ENCODE measurements at regions of chr1 and their contacts with region 1.

Region 1: DNA sequence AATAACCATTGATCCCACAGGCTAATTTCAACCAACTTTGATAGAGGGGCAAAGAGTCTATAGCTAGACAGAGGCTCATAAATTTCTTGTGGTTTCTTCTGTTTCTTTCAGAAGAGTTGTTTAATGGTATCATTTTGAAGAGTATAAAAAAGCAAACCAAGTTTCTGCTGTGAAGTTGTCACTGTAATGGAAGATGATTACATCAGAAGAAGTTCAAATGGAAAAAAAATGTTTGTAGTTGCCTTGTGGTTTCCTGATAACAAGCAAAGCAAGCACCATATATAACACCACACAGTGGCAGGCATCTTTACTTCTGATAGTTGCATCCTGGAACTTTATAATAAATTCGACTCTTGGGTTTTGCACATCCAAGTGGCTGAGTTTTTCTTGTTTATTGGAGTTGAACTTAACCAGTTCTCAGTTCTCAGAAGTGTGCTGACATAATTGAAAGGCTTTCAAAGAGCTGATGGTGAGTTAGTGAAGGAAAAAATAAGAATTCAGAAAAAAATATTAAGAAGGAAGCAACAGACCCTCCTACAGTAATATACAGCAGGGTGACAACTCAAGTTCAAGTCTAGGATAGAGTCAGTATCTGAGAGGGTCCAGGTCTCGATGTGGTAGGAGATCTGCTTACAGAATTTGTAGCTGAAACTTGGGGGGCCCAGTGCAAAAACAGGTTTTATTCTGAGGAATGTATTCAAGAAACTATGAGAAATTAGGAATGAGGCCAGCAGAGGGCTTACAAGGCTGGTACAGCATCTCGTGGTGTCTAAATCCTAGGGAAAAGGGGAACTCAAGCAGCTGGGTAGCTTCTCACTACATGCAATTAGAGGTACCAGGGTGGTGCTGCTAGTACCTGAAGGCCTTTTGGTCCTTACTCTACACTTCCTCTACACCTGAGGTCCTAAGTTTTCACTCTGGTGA is 123.5 kb downstream of the CRB1 start:
- DNase-seq: no peak
- CTCF ChIP-seq: no peak

Region 2: GRCh38 chr1:197374428-197374827 is 17.1 kb before region 1 on chr1:
- CTCF ChIA-PET with region 1: interaction called, 12 read pairs
- POLR2A ChIA-PET with region 1: no interaction called
- DNase-seq: no peak
- CTCF ChIP-seq: no peak

Region 3: DNA sequence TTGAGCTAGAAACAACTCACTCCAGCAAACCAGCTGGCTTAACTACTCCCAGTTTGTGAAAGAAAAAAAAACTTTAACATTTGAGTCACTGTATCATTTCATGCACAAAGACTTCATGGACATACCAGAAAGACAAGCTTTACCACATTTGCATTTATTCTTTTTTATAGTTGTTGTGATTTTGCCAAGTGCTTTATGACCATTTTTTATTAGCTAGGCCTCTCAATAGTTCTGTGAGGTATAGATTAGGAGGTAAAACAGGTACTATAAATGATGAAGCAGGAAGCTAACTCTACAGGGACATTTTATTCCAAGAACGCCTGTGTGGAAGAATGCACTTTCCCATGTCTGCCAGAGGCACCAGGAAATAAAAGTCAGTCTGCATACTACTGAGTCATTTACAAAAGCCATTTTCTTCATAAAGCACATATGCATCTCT is 392.0 kb after region 1 on chr1:
- CTCF ChIA-PET with region 1: no interaction called
- POLR2A ChIA-PET with region 1: no interaction called
- DNase-seq: no peak
- CTCF ChIP-seq: no peak